OCI-LY7 (cell line): ENCODE measurements at regions of chr11 and their contacts with region 1.

Region 1: DNA sequence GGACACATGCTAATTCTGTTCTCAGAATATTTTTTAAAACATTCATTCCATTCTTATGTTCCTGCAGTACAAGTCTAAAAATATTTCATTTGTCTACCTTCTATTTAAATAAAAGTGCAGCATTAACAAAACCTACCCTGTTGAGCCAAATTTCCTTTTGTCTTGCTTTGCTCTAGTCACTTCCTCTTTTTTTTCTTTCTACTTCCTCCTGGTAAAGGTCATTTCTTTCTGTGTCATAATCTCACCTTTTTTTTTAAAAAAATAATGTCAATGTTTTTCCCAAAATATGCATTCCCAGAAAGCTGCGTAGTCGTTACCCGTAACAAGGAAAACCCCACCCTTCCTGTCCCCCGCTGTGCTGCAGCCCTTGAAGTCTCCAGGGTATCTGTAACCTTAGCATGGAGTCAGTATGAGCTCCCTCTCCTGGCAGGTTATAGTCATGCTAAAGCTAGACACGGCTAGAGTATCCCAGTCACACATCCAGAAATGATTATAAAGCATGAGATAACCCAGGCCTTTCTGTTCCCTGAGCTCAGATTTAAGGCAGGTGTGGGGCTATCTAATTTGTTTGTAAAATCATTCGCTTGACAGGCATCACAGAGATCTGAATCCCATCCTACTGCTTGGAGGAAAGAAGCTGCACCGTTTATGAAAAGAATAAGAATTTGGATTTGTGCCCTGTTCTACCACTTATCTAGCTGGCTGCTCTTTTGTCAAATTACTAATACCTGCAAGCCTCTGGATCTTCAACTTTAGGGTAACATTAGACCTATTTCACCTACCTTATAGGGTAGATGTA is 51.1 kb upstream of the EED start:
- DNase-seq: peak; percentile 87
- H3K4me3 ChIP-seq: peak overlapping the region; percentile 62
- H3K27ac ChIP-seq: peak overlapping the region; percentile 76
- H3K4me1 ChIP-seq: peaks cover 23% of the 10 kb centered on the region
- CTCF ChIP-seq: peak; percentile 97

Region 2: GRCh38 chr11:85961930-85962363 is 231.5 kb before region 1 on chr11:
- CTCF ChIA-PET with region 1: no interaction called
- POLR2A ChIA-PET with region 1: no interaction called
- intact Hi-C with region 1: no loop called
- DNase-seq: no peak
- H3K4me3 ChIP-seq: no peak overlapping the region
- H3K27ac ChIP-seq: no peak overlapping the region
- H3K4me1 ChIP-seq: no peaks in the 10 kb centered on the region
- CTCF ChIP-seq: no peak

Region 3: DNA sequence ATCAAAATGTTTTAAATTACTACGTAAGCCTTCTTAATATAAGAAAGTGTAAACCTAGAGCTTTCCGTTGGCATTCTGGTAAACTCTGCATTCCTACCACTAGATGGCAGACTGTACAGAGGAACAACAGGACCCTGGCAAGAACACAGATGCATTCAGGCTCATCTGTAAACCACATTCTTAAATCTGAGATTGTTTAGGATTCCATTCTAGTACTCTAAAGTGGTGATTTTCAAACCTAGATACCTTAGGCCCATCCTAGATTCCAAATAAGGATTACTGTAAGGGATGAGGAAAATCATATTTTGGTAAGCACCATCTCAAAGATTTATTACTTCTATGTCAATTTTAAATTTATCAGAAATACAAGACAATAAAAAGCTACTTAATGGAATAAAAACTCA is 151.5 kb before region 1 on chr11:
- CTCF ChIA-PET with region 1: interaction called, 11 read pairs
- POLR2A ChIA-PET with region 1: interaction called, 6 read pairs
- intact Hi-C with region 1: loop called (anchors 1 kb)
- DNase-seq: peak; percentile 79
- H3K4me3 ChIP-seq: no peak overlapping the region
- H3K27ac ChIP-seq: no peak overlapping the region
- H3K4me1 ChIP-seq: peaks cover 37% of the 10 kb centered on the region
- CTCF ChIP-seq: peak; percentile 99